ENCODE measurements at regions of chr19 and their contacts with region 1.

Region 1: GRCh38 chr19:49301165-49301865 is 23.7 kb downstream of the SLC6A16 start:
- DNase-seq: peak; percentile 71 to 81
- ATAC-seq: peak in 3 of 4 donors; percentile 61 to 78 (median 67)
- H3K4me3 ChIP-seq: no peak overlapping the region
- H3K27ac ChIP-seq: no peak overlapping the region
- H3K4me1 ChIP-seq: no peaks in the 10 kb centered on the region
- H3K27me3 ChIP-seq: no peaks in the 10 kb centered on the region
- CTCF ChIP-seq: peak; percentile 69

Region 2: GRCh38 chr19:49224856-49225255 is 76.5 kb before region 1 on chr19:
- intact Hi-C with region 1: loop called in 1 of 2 experiments (anchors 5 kb)
- DNase-seq: peak in 1 of 2 donors; percentile 37
- ATAC-seq: peak; percentile 78 to 87 (median 83)
- H3K4me3 ChIP-seq: no peak overlapping the region
- H3K27ac ChIP-seq: no peak overlapping the region
- H3K4me1 ChIP-seq: no peaks in the 10 kb centered on the region
- H3K27me3 ChIP-seq: no peaks in the 10 kb centered on the region
- CTCF ChIP-seq: peak; percentile 50

Measured in psoas muscle (tissue), 8 donors.